ENCODE measurements at regions of chr20 and their contacts with region 1.

Region 1: DNA sequence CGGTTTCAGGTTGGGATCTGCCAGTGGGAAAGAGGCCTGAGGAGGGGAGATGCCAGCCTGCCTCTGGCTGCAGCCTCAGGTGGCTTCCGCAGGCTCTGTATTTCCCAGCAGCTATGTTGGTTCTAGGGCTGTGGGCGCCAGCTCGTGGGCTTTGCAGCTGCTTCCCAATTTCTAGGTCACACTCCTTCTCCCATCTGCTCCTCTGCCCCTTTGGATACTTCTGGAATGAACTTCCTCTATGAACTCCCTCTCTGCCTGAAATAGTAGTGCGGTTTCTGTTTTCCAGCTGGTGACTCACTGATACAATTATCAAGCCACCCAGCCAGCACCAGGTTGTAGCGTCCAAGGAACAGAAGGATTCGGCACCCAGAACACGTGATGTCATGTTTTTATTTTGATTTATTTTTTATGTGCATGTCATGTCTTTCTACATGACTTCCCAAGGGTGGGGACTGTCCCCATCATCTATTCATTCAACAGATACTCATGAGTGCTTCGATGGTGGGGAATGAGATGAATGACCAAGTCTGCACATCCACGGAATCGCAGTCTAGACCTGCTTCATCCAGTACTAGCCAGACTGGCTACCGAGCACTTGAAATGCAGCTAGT is 38.0 kb downstream of the TGM2 start:
- DNase-seq: peak; percentile 45 to 86 (median 62)
- ATAC-seq: peak; percentile 71
- H3K4me3 ChIP-seq: no peak overlapping the region
- H3K27ac ChIP-seq: peak overlapping the region; percentile 58
- H3K4me1 ChIP-seq: peaks cover 40 to 52% of the 10 kb centered on the region in 2 experiments
- H3K27me3 ChIP-seq: no peaks in the 10 kb centered on the region
- CTCF ChIP-seq: no peak
- EP300 ChIP-seq: peak; percentile 90
- POLR2A ChIP-seq: no peak
- RAD21 ChIP-seq: 0 out of 4 replicates have a peak, but pooled peaks have one; percentile 6 to 10

Region 2: GRCh38 chr20:38139977-38140753 is 13.0 kb after region 1 on chr20:
- CTCF ChIA-PET with region 1: no interaction called
- POLR2A ChIA-PET with region 1: interaction called, 14 read pairs
- in situ Hi-C with region 1: no loop called
- intact Hi-C with region 1: no loop called
- DNase-seq: no peak
- ATAC-seq: no peak
- H3K4me3 ChIP-seq: no peak overlapping the region
- H3K27ac ChIP-seq: no peak overlapping the region
- H3K4me1 ChIP-seq: peaks cover 30 to 41% of the 10 kb centered on the region in 2 experiments
- H3K27me3 ChIP-seq: no peaks in the 10 kb centered on the region
- CTCF ChIP-seq: no peak
- EP300 ChIP-seq: no peak
- POLR2A ChIP-seq: no peak
- RAD21 ChIP-seq: no peak

Measured in K562 (cell line).